Sigmoid colon (tissue), 7 donors: ENCODE measurements at regions of chr2 and their contacts with region 1.

Region 1: DNA sequence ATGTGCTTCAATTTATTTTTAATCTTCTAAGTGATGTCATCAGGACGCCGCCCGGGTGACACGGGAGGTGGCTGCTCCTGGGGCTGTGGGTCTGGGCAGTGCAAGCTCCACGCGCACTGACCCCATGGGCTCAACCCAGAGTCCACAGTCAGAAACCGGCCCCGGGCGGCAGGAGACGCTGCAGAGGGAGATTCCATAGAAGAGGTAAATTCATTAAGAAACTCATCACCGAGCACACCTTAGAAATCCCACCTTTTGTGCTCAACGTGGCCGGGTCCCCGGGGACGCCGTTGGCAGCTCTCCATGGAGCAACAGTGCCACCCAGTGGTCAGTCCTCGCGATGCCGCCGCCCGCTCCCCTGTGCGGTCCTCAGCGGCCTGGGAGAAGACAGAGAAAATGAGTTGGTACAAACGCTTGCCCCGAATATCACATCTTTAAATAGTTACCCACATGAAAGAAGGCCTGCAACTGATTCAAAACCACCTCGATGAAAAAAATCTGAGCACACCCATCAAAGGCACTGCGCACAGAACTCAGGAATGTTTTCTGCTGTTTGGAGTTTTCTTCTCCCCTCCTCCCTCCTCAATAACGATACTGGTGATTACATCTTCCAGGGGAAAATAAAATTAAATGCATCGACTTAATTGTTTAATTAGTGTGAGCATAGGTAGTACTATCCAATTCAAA is 92.6 kb downstream of the CMPK2 start:
- DNase-seq: peak; percentile 71
- H3K4me3 ChIP-seq: peak overlapping the region in 1 of 4 donors; percentile 10
- H3K27ac ChIP-seq: no peak overlapping the region
- H3K4me1 ChIP-seq: peaks cover 0 to 7% (median 2%) of the 10 kb centered on the region in 4 donors
- H3K27me3 ChIP-seq: no peaks in the 10 kb centered on the region
- CTCF ChIP-seq: peak; percentile 33 to 91 (median 75)
- EP300 ChIP-seq: no peak
- POLR2A ChIP-seq: no peak

Region 2: DNA sequence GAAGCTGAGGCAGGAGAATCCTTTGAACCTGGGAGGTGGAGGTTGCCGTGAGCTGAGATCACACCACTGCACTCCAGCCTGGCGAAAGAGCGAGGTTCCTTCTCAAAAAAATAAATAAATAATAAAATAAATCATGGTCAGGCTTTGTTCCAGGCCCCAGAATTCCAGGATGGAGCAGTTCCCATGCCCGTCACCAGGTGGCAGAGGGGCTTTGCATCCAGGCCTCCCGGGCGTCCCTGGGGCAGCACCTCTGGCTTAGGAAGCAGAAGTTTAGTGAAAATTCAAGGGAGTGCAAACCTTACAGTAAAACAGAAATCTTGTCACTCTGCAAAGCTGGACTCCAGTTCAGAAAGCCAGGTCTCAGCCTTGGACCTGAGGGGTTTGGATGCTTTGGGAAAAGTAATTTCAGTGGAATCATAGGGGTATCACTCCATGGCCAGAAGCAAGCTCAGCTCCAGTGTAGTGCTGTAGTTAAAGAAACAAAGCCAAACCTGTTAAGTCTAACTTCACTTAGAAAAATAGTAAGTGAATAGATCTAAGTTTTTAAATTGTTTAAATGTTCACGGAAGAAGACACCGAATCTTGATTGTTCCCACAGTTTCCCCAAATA is 420.1 kb before region 1 on chr2:
- intact Hi-C with region 1: loop called (anchors 10 kb)
- DNase-seq: no peak
- H3K4me3 ChIP-seq: no peak overlapping the region
- H3K27ac ChIP-seq: no peak overlapping the region
- H3K4me1 ChIP-seq: no peaks in the 10 kb centered on the region
- H3K27me3 ChIP-seq: no peaks in the 10 kb centered on the region
- CTCF ChIP-seq: peak in 2 of 4 experiments; percentile 35 to 40
- EP300 ChIP-seq: no peak
- POLR2A ChIP-seq: no peak